ENCODE measurements at regions of chr3 and their contacts with region 1.

Region 1: DNA sequence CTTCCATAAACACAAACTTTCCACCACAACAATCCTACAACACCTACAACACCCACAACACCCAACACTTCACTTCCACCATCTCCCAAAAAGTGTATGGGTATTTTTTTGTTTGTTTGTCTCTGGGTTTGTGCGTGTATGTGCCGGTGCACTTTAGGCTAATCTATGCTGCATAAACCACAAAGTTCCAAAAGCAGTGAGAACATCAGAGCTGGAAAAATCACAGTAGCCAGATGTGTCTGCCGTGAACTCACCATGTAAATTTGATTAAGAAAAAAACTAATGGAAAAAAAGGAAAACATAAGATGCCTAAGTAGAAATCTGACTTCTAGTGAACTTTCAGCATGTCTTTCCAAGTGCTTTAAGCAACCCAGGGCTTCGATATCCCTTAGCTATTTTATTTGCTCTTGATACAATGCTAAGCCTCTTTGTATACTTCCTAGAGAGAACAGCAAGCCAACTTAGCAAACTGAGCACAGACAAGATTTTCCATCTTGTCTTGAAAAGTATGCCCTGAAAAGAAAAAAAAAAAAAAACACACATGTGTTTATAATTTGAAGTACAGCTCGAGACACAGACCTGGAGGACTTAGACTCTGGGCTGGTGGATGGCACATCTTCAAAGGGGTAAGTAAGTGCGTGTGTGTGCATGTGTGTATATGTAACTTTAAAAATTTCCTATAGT is 91.4 kb downstream of the WWTR1 start:
- DNase-seq: no peak
- H3K4me3 Mint-ChIP-seq: no peak overlapping the region
- H3K27ac Mint-ChIP-seq: no peak overlapping the region
- H3K4me1 Mint-ChIP-seq: no peaks in the 10 kb centered on the region
- H3K27me3 Mint-ChIP-seq: no peaks in the 10 kb centered on the region

Region 2: DNA sequence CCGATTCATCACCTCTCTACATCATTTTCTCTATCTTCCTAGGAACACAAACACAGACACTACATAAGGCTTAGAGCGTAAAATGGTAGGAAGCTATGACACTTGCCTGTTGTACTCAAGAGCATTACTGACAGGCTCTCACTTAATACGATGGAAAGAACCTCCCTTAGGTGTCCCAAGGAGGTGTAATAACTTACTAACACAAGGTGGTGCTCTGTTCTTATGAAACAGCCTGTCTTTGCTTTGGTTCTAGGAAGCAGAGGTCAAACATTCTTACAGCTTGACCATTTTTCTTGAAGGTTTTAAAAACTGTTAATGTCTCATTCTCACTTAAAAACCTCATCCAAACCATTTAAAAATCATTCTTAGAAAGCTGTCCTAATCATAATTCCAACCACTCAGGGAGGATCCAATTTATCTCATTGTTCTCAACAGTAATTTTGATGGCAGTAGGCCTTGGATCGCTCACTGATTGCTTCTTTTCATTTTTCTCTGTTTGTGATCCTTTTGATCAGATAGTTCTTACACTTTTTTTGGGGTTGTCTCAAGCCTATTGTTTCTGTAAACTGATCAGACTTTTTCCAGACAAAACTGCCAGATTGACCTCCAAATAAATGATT is 1186.6 kb before region 1 on chr3:
- CTCF ChIA-PET with region 1: no interaction called
- intact Hi-C with region 1: no loop called
- DNase-seq: no peak
- H3K4me3 Mint-ChIP-seq: no peak overlapping the region
- H3K27ac Mint-ChIP-seq: no peak overlapping the region
- H3K4me1 Mint-ChIP-seq: no peaks in the 10 kb centered on the region
- H3K27me3 Mint-ChIP-seq: no peaks in the 10 kb centered on the region

Region 3: GRCh38 chr3:149638228-149639092 is 72.0 kb after region 1 on chr3:
- CTCF ChIA-PET with region 1: no interaction called
- intact Hi-C with region 1: no loop called
- DNase-seq: no peak
- H3K4me3 Mint-ChIP-seq: no peak overlapping the region
- H3K27ac Mint-ChIP-seq: no peak overlapping the region
- H3K4me1 Mint-ChIP-seq: no peaks in the 10 kb centered on the region
- H3K27me3 Mint-ChIP-seq: peaks cover 13% of the 10 kb centered on the region

Region 4: DNA sequence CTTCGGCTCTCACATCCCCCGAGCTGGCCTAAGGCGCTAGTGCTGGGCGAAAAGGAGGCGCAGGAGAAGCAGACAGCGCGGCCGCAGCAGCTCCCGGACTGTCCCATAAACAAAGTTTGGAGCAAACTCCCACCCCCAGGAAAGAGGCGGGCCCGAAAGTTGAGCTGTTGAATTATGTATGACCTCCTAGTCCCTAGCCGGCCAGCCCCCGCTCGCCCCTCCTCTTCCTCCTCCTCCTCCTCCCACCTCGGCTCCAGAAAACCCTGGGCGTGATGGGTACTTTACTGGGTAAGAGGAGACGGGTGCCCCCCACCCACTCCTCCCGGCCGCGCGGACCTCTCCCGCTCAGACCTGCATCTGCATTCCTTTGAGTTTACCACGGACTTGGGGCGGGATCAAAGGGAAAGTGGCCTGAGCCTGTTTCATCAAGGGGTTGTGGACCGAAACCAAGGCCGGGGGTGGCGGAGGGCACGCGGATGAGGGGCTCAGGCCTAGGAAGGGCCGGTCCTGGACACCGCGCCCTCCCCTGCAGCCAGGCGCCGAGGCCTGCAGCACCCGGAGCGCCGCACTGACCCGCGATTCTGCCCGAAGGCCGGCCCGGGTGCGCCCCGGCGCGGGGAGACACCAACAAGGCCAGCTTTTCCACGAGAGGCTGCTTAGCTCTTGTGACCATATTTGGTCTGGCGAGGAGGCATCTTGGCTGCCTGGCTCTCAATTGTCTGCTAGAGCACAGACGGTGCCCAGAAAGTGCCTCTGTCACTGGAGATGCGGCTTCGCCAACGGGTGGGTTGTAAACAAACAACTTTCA is 91.7 kb after region 1 on chr3 and contains the start of gene WWTR1:
- CTCF ChIA-PET with region 1: interaction called, 4 read pairs
- intact Hi-C with region 1: loop called (anchors 5 kb)
- DNase-seq: peak; percentile 59
- H3K4me3 Mint-ChIP-seq: peak within 1 kb of the TSS; percentile 81
- H3K27ac Mint-ChIP-seq: no peak within 1 kb of the TSS
- H3K4me1 Mint-ChIP-seq: peaks cover 11% of the 10 kb centered on the region
- H3K27me3 Mint-ChIP-seq: peaks cover 67% of the 10 kb centered on the region
- total RNA-seq, gene WWTR1: 0.19 to 0.42 TPM